GM12878 (cell line): ENCODE measurements at regions of chr19 and their contacts with region 1.

Region 1: GRCh38 chr19:28009696-28010095 is 1203.3 kb downstream of the UQCRFS1 start:
- DNase-seq: no peak
- ATAC-seq: peak; percentile 58
- H3K4me3 ChIP-seq: no peak overlapping the region
- H3K27ac ChIP-seq: no peak overlapping the region
- H3K4me1 ChIP-seq: no peaks in the 10 kb centered on the region; the same call in 1 of the 2 replicates
- H3K27me3 ChIP-seq: no peaks in the 10 kb centered on the region
- CTCF ChIP-seq: no peak
- EP300 ChIP-seq: no peak
- POLR2A ChIP-seq: no peak
- RAD21 ChIP-seq: no peak

Region 2: DNA sequence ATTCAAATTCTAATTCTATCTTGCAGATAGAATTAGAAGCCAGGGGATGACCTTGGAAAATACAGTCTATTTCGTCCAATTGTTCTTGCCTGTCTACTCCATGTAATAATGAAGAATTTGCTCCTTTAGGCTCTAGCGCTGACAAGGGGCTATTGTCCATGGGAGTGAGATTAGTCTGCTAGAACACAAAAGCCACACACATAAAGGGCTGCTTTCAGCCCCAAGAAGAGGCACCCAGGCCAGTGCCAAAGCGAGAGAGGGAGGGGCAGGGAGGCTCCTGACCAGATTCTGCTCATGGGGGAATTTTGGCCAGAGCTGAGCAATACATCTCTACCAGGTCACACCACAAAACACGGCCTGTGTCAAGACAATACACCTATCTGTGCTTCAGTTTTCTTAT is 103.6 kb before region 1 on chr19:
- CTCF ChIA-PET with region 1: no interaction called
- POLR2A ChIA-PET with region 1: no interaction called
- RAD21 ChIA-PET with region 1: no interaction called
- SMC1A ChIA-PET with region 1: no interaction called
- in situ Hi-C with region 1: no loop called
- intact Hi-C with region 1: no loop called
- DNase-seq: no peak
- ATAC-seq: no peak
- H3K4me3 ChIP-seq: no peak overlapping the region
- H3K27ac ChIP-seq: no peak overlapping the region
- H3K4me1 ChIP-seq: no peaks in the 10 kb centered on the region
- H3K27me3 ChIP-seq: no peaks in the 10 kb centered on the region
- CTCF ChIP-seq: no peak
- EP300 ChIP-seq: no peak
- POLR2A ChIP-seq: no peak
- RAD21 ChIP-seq: no peak

Region 3: GRCh38 chr19:27986299-27986698 is 23.4 kb before region 1 on chr19:
- CTCF ChIA-PET with region 1: interaction called, 16 read pairs
- POLR2A ChIA-PET with region 1: no interaction called
- RAD21 ChIA-PET with region 1: interaction called, 8 read pairs
- SMC1A ChIA-PET with region 1: interaction called, 18 read pairs
- in situ Hi-C with region 1: no loop called
- intact Hi-C with region 1: no loop called
- DNase-seq: no peak
- ATAC-seq: no peak
- H3K4me3 ChIP-seq: no peak overlapping the region
- H3K27ac ChIP-seq: no peak overlapping the region
- H3K4me1 ChIP-seq: no peaks in the 10 kb centered on the region
- H3K27me3 ChIP-seq: no peaks in the 10 kb centered on the region
- CTCF ChIP-seq: no peak
- EP300 ChIP-seq: no peak
- POLR2A ChIP-seq: no peak
- RAD21 ChIP-seq: no peak

Region 4: DNA sequence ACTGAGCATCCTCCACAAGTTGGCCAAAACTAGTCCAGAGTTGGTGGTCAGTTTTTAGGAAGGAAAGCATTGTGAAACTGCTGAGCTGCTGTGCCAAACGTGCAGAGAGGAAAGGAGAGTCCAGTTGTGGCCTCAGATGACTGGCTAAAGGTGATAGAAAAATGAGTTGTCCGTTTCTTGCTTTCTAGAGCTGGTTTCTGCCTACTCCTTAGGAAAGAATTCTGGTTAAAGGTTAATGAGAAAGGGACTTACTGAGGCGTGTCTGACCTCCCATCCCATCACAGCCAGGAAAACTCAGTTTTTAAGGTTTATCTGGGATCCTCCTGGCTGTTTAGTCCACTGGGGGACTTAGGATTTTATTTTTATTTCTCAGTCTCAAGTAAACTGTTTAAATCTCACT is 16.9 kb after region 1 on chr19:
- CTCF ChIA-PET with region 1: interaction called, 3 read pairs
- POLR2A ChIA-PET with region 1: no interaction called
- RAD21 ChIA-PET with region 1: interaction called, 3 read pairs
- SMC1A ChIA-PET with region 1: interaction called, 16 read pairs
- in situ Hi-C with region 1: no loop called
- intact Hi-C with region 1: no loop called
- DNase-seq: no peak
- ATAC-seq: no peak
- H3K4me3 ChIP-seq: no peak overlapping the region
- H3K27ac ChIP-seq: no peak overlapping the region
- H3K4me1 ChIP-seq: no peaks in the 10 kb centered on the region
- H3K27me3 ChIP-seq: no peaks in the 10 kb centered on the region
- CTCF ChIP-seq: no peak
- EP300 ChIP-seq: no peak
- POLR2A ChIP-seq: no peak
- RAD21 ChIP-seq: no peak

Region 5: GRCh38 chr19:28074737-28075136 is 65.0 kb after region 1 on chr19:
- CTCF ChIA-PET with region 1: interaction called, 12 read pairs
- POLR2A ChIA-PET with region 1: interaction called, 13 read pairs
- RAD21 ChIA-PET with region 1: interaction called, 41 read pairs
- SMC1A ChIA-PET with region 1: interaction called, 65 read pairs
- in situ Hi-C with region 1: no loop called
- intact Hi-C with region 1: loop called (anchors 10 kb)
- DNase-seq: peak; percentile 75
- ATAC-seq: peak; percentile 80
- H3K4me3 ChIP-seq: no peak overlapping the region
- H3K27ac ChIP-seq: peak overlapping the region; percentile 69
- H3K4me1 ChIP-seq: peaks cover 3% of the 10 kb centered on the region
- H3K27me3 ChIP-seq: no peaks in the 10 kb centered on the region
- CTCF ChIP-seq: no peak
- EP300 ChIP-seq: no peak
- POLR2A ChIP-seq: no peak
- RAD21 ChIP-seq: 0 out of 2 replicates have a peak, but pooled peaks have one; percentile 12

Region 6: GRCh38 chr19:28152195-28152594 is 142.5 kb after region 1 on chr19:
- CTCF ChIA-PET with region 1: interaction called, 31 read pairs
- POLR2A ChIA-PET with region 1: interaction called, 4 read pairs
- RAD21 ChIA-PET with region 1: interaction called, 12 read pairs
- SMC1A ChIA-PET with region 1: interaction called, 26 read pairs
- in situ Hi-C with region 1: no loop called
- intact Hi-C with region 1: no loop called
- DNase-seq: no peak
- ATAC-seq: no peak
- H3K4me3 ChIP-seq: no peak overlapping the region
- H3K27ac ChIP-seq: no peak overlapping the region
- H3K4me1 ChIP-seq: no peaks in the 10 kb centered on the region
- H3K27me3 ChIP-seq: no peaks in the 10 kb centered on the region
- CTCF ChIP-seq: no peak
- EP300 ChIP-seq: no peak
- POLR2A ChIP-seq: no peak
- RAD21 ChIP-seq: no peak

Region 7: DNA sequence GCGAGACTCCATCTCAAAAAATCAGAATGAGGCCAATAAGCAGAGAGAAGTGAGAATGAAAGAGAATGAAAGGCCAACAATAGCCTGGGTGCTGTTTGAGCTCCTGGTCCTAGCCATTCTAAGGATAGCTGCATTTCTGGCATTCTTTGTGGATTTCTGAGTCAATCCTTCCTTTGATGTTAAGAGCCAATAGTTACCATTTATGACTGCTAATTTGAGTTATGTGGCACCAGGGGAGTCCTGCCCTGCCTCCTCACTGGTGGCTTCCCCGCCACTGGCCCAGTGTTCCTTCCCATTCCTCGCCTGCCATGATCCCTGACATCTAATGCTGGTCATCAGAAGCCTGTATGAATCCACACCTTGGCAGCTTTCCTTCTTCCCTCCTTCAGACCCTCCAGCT is 212.0 kb after region 1 on chr19:
- CTCF ChIA-PET with region 1: interaction called, 28 read pairs
- POLR2A ChIA-PET with region 1: no interaction called
- RAD21 ChIA-PET with region 1: interaction called, 29 read pairs
- SMC1A ChIA-PET with region 1: interaction called, 32 read pairs
- in situ Hi-C with region 1: no loop called
- intact Hi-C with region 1: no loop called
- DNase-seq: no peak
- ATAC-seq: no peak
- H3K4me3 ChIP-seq: no peak overlapping the region
- H3K27ac ChIP-seq: no peak overlapping the region
- H3K4me1 ChIP-seq: no peaks in the 10 kb centered on the region
- H3K27me3 ChIP-seq: no peaks in the 10 kb centered on the region
- CTCF ChIP-seq: no peak
- EP300 ChIP-seq: no peak
- POLR2A ChIP-seq: no peak
- RAD21 ChIP-seq: no peak

Region 8: DNA sequence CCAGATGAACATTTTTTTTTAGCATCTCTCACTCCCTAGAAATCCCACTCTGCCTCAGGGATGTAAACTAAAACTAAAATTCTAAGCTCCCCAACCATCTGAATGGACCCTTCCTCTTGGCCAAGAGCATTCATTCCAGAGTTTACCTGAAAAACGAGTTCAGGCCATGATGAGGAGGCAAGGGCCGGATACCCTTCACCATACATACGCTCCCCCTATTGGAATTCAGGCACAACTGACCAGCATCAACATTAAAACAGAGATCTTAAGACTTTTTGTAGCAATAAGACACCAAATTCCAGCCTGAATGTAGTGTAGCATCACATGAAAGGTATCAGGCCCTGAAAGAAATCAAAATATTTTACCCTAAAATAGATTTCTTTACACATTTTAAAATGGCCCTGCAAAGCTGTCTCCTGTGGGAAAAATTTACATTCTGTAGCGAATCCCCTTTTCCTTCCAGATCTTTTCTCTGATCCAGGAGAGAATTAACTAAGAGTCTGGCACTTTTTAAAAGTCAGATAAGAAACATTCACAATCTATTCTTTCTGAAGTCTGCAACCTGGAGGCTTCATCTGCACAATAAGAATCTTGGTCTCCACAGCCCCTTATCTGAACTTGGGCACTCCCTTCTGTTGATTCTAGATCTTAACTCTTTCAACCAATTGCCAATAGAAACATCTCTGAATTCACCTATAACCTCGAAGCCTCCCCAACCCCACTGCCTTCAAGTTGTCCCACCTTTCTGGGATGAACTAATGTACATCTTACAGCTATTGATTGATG is 314.8 kb after region 1 on chr19:
- CTCF ChIA-PET with region 1: interaction called, 22 read pairs
- POLR2A ChIA-PET with region 1: no interaction called
- RAD21 ChIA-PET with region 1: interaction called, 8 read pairs
- SMC1A ChIA-PET with region 1: interaction called, 9 read pairs
- in situ Hi-C with region 1: no loop called
- intact Hi-C with region 1: no loop called
- DNase-seq: no peak
- ATAC-seq: no peak
- H3K4me3 ChIP-seq: no peak overlapping the region
- H3K27ac ChIP-seq: no peak overlapping the region
- H3K4me1 ChIP-seq: no peaks in the 10 kb centered on the region
- H3K27me3 ChIP-seq: no peaks in the 10 kb centered on the region
- CTCF ChIP-seq: no peak
- EP300 ChIP-seq: no peak
- POLR2A ChIP-seq: no peak
- RAD21 ChIP-seq: no peak